ENCODE measurements at regions of chr1 and their contacts with region 1.

Region 1: GRCh38 chr1:145845514-145846161 is at the start of gene NUDT17:
- DNase-seq: peak; percentile 79
- H3K4me3 Mint-ChIP-seq: no peak within 1 kb of the TSS
- H3K27ac Mint-ChIP-seq: peak within 1 kb of the TSS; percentile 45
- H3K4me1 Mint-ChIP-seq: peaks cover 7% of the 10 kb centered on the region
- H3K27me3 Mint-ChIP-seq: no peaks in the 10 kb centered on the region
- total RNA-seq, gene NUDT17: 2.5 to 2.7 TPM

Region 2: DNA sequence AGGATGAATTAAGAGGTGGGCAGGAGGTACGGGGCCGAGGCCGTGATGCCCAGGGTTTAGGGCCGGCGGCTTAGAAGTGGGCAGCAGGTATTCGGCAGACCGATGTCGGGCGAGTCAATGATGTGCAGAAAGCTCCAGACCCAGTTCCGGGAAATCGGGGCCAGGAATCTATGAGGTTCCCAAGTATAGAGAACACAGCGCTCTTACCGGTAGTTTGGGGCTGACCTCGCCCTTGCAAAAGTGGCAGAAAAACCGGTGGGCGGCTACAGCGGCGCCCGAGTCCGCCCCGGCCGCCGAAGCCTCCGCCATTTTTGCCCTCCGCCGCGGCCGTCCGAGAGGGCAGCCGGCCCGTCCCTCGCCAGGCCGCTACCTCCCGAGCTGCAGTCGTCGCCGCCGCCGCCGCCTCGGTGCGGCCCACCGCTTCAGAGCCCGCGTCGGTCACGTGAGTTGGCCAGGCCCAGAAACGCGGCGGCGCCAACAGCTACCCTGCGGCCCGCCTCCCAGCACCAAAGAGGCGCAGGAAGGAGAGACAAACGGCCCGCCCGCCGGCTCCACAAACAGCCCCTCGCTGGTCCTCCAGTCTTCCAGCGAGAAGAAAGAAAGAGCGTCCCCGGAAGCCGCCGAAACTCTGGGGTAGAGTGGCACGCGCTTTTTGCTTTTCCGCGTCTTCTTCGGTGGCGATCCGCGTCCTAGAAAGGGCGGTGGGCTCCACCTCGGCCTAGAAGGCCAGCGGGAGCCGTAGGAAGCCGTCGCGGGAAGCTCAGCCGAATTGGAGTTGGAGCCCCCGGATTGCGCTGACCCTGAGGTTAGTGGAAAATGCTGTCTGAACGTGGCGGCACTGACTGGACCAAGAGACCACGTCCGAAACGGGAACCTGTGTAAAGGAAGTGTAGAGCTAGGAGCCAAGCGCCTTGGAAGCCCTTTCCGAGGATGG is 21.8 kb before region 1 on chr1 and contains the starts of genes POLR3C and RNF115:
- CTCF ChIA-PET with region 1: interaction called, 46 read pairs
- POLR2A ChIA-PET with region 1: interaction called, 29 read pairs
- DNase-seq: peak; percentile 91
- H3K4me3 Mint-ChIP-seq: peak within 1 kb of the TSS; percentile 99
- H3K27ac Mint-ChIP-seq: peak within 1 kb of the TSS; percentile 89
- H3K4me1 Mint-ChIP-seq: peaks cover 42% of the 10 kb centered on the region
- H3K27me3 Mint-ChIP-seq: no peaks in the 10 kb centered on the region
- total RNA-seq, gene POLR3C: 29.7 to 32.1 TPM
- total RNA-seq, gene RNF115: 12.9 to 13.1 TPM

Region 3: DNA sequence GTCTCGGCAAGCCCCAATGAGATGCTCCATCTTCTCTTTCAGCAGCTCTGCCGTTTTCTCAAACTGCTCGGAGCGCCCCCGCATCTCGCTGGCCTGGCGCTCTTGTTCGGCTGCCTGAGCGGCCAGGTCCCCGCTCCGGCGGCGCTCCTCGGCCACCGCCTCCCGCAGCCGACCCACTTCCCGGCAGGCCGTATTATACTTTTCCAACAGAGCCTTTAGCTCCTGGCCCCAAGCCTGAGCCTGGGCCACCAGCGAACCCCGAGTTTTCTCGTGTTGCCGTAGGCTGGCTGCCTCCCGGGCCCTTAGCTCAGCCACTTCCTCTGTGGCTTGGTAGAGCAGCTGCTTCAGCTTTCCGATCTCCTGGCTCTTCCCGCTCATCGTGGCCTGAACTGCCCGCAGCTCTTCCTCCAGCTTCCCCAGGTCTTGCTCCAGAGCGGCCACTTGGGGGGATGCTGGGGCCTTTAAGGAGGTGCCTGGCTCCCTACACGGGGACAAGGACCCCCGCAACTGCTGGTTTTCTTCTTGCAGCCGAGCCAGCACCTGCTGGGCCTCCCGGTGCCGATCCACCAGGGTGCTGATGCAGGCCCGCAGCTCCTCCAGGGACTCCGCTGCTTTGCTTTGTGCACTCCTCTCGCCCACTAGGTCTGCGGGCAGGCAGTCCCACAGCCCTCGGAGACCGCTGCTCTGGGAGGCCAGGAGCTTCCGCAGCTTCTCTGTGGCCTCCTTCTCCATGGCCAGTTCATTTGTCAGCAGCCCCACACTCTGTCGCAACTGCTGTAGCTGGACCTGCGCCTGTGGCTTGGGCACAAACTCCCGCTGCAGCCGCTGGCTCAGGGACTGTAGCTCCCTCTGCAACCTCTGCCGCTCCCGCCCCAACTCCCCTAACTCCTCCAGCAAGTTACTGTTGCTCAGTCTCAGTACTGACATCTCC is 26.6 kb after region 1 on chr1:
- CTCF ChIA-PET with region 1: interaction called, 15 read pairs
- POLR2A ChIA-PET with region 1: interaction called, 3 read pairs
- DNase-seq: peak; percentile 54
- H3K4me3 Mint-ChIP-seq: peak overlapping the region; percentile 70
- H3K27ac Mint-ChIP-seq: peak overlapping the region; percentile 56
- H3K4me1 Mint-ChIP-seq: peaks cover 19% of the 10 kb centered on the region
- H3K27me3 Mint-ChIP-seq: peaks cover 48% of the 10 kb centered on the region

Region 4: GRCh38 chr1:145891587-145892485 is 46.2 kb after region 1 on chr1:
- CTCF ChIA-PET with region 1: interaction called, 58 read pairs
- POLR2A ChIA-PET with region 1: interaction called, 4 read pairs
- DNase-seq: peak; percentile 66
- H3K4me3 Mint-ChIP-seq: no peak overlapping the region
- H3K27ac Mint-ChIP-seq: no peak overlapping the region
- H3K4me1 Mint-ChIP-seq: peaks cover under 1% of the 10 kb centered on the region
- H3K27me3 Mint-ChIP-seq: peaks cover 2% of the 10 kb centered on the region

Region 5: GRCh38 chr1:145957443-145958319 is 112.0 kb after region 1 on chr1 and contains the start of gene LIX1L:
- CTCF ChIA-PET with region 1: interaction called, 25 read pairs
- POLR2A ChIA-PET with region 1: interaction called, 13 read pairs
- DNase-seq: peak; percentile 96
- H3K4me3 Mint-ChIP-seq: peak within 1 kb of the TSS; percentile 86
- H3K27ac Mint-ChIP-seq: peak within 1 kb of the TSS; percentile 86
- H3K4me1 Mint-ChIP-seq: peaks cover 73% of the 10 kb centered on the region
- H3K27me3 Mint-ChIP-seq: peaks cover 5% of the 10 kb centered on the region
- total RNA-seq, gene LIX1L: 50.3 to 51.0 TPM

Region 6: GRCh38 chr1:145978854-145979759 is 133.5 kb after region 1 on chr1:
- CTCF ChIA-PET with region 1: interaction called, 45 read pairs
- POLR2A ChIA-PET with region 1: interaction called, 9 read pairs
- DNase-seq: peak; percentile 90
- H3K4me3 Mint-ChIP-seq: no peak overlapping the region
- H3K27ac Mint-ChIP-seq: no peak overlapping the region
- H3K4me1 Mint-ChIP-seq: peaks cover 6% of the 10 kb centered on the region
- H3K27me3 Mint-ChIP-seq: no peaks in the 10 kb centered on the region

Region 7: DNA sequence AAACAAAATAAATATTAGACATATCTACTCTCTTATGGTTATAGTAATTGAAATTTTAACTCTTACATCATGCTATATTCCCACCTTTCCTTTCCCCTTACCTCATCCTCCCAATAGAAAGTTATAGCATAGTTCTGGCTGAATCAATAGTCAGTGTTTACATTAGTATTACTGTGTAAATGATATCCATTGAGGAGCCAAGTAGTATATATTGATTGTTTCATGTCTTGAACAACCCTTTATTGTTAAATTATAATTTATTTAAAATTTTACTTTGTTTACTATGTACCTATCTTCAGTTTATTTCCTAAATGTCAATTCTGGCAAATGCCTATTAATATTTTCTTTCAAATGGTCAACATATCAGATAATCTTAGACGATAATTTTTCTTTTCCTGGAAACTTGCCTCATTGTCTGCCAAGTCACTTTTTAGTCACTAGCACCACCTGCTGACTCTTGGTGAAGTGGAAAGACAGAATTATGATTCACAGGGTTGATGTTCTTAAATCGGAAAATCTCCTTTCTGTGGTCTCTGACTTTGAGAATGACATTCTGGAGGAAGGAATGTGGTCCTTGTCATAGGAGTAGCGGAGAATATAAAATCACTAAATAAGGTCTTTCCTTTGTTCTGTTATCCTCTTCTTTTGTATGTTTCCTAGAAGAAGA is 167.2 kb after region 1 on chr1:
- CTCF ChIA-PET with region 1: interaction called, 89 read pairs
- POLR2A ChIA-PET with region 1: interaction called, 3 read pairs
- DNase-seq: peak; percentile 62
- H3K4me3 Mint-ChIP-seq: no peak overlapping the region
- H3K27ac Mint-ChIP-seq: no peak overlapping the region
- H3K4me1 Mint-ChIP-seq: peaks cover 11% of the 10 kb centered on the region
- H3K27me3 Mint-ChIP-seq: peaks cover 20% of the 10 kb centered on the region

Measured in activated CD4-positive, alpha-beta memory T cell treated with anti-CD3 and anti-CD28 coated beads, Interleukin-2, amount 10 ng/mL, durations not matched to agents 7 days and 5 days (primary cell).